Activated naive CD4-positive, alpha-beta T cell treated with anti-CD3 and anti-CD28 coated beads, Interleukin-2, amount 10 ng/mL, durations not matched to agents 7 days and 5 days (primary cell): ENCODE measurements at regions of chr12 and their contacts with region 1.

Region 1: GRCh38 chr12:14845350-14845750 is 2.0 kb upstream of the ART4 start:
- DNase-seq: peak; percentile 52
- H3K4me3 Mint-ChIP-seq: no peak overlapping the region
- H3K27ac Mint-ChIP-seq: no peak overlapping the region
- H3K4me1 Mint-ChIP-seq: peaks cover 2% of the 10 kb centered on the region
- H3K27me3 Mint-ChIP-seq: peaks cover 8% of the 10 kb centered on the region

Region 2: DNA sequence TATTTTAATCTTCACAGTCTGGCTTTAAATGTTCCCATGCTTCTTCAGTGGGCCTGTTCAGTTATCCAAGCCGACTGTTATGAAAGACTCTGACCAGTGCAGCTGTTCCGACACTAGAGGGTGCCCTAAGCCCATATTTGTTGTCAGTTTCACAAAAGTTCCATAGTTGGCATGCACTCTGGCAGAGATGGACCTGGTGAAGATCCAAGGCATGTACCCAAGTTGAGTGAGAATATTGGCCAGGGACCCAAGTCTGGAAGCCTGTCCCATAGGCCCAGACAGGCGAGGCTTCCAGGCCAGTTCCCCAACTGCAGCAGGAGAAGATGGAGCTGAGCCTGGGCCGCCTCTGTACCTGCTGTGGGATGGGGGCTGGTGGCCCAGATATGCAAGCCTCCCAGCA is 121.6 kb before region 1 on chr12:
- CTCF ChIA-PET with region 1: interaction called, 11 read pairs
- DNase-seq: peak; percentile 73
- H3K4me3 Mint-ChIP-seq: no peak overlapping the region
- H3K27ac Mint-ChIP-seq: no peak overlapping the region
- H3K4me1 Mint-ChIP-seq: peaks cover 3% of the 10 kb centered on the region
- H3K27me3 Mint-ChIP-seq: peaks cover 17% of the 10 kb centered on the region

Region 3: GRCh38 chr12:14741153-14741552 is 104.2 kb before region 1 on chr12:
- CTCF ChIA-PET with region 1: no interaction called
- DNase-seq: no peak
- H3K4me3 Mint-ChIP-seq: no peak overlapping the region
- H3K27ac Mint-ChIP-seq: no peak overlapping the region
- H3K4me1 Mint-ChIP-seq: no peaks in the 10 kb centered on the region
- H3K27me3 Mint-ChIP-seq: no peaks in the 10 kb centered on the region